Tibial artery (tissue), 4 donors: ENCODE measurements at regions of chr12 and their contacts with region 1.

Region 1: DNA sequence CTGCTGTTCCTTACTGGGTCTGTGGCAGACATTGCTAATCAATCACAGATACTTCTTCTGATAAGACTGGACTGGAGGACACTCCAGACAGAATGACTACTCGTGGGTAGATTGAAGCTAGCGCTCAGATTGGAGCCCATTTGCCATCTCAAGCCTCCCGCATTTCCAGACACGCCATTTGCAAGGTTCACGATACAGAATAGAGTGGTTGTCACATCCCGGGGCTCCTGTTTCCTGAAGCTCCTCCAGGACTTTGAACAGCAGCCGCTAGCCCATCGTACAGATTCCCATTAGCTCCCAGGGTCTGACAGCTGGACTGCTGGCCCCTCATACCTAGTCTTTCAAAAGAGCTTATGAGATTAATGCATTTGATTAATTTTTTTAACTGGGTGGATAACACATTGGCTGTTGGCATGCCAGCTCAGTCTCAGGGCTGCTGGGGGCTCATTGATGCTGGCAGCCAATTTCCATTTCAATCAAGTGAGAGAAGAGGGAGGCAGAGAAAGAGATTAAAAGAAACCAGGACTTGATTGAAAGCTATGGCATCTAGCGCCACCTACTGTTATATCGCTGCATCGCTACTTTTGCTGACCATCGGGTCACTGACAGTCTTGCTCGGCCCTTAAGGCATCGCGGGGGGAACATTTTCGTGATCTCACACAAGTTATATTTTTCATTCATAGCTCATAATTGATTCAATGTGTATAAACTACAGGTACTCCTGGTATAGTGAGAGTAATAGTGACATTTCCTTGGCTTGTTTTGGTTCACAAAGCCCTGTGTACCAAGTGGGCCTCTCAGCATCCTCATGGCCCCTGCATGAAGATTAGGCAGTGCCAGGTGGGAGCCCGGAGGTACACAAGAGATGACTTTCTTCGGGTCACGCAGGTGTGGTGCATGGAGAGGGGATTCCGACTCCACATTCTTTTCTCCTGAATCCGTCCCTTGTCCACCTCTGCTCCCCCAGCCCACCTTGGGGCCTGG is 78.6 kb downstream of the CCDC60 start:
- DNase-seq: peak; percentile 52 to 67
- H3K4me3 ChIP-seq: no peak overlapping the region
- H3K27ac ChIP-seq: no peak overlapping the region
- H3K4me1 ChIP-seq: no peaks in the 10 kb centered on the region
- H3K27me3 ChIP-seq: peaks cover 0 to 20% of the 10 kb centered on the region in 2 donors
- CTCF ChIP-seq: peak; percentile 78 to 90

Region 2: GRCh38 chr12:118884226-118884625 is 528.9 kb before region 1 on chr12:
- intact Hi-C with region 1: no loop called
- DNase-seq: no peak
- H3K4me3 ChIP-seq: no peak overlapping the region
- H3K27ac ChIP-seq: no peak overlapping the region
- H3K4me1 ChIP-seq: no peaks in the 10 kb centered on the region
- H3K27me3 ChIP-seq: no peaks in the 10 kb centered on the region
- CTCF ChIP-seq: no peak

Region 3: GRCh38 chr12:118979763-118980406 is 433.2 kb before region 1 on chr12:
- intact Hi-C with region 1: loop called (anchors 10 kb)
- DNase-seq: no peak
- H3K4me3 ChIP-seq: no peak overlapping the region
- H3K27ac ChIP-seq: no peak overlapping the region
- H3K4me1 ChIP-seq: peaks cover 0 to 17% (median 9%) of the 10 kb centered on the region in 4 donors
- H3K27me3 ChIP-seq: peaks cover 0 to 39% of the 10 kb centered on the region in 2 donors
- CTCF ChIP-seq: peak; percentile 40 to 54

Region 4: GRCh38 chr12:119115296-119115905 is 297.7 kb before region 1 on chr12:
- intact Hi-C with region 1: loop called (anchors 2 kb)
- DNase-seq: no peak
- H3K4me3 ChIP-seq: no peak overlapping the region
- H3K27ac ChIP-seq: no peak overlapping the region
- H3K4me1 ChIP-seq: peaks cover 0 to 3% (median 0%) of the 10 kb centered on the region in 4 donors
- H3K27me3 ChIP-seq: peaks cover 0 to 16% of the 10 kb centered on the region in 2 donors
- CTCF ChIP-seq: peak; percentile 88 to 93

Region 5: DNA sequence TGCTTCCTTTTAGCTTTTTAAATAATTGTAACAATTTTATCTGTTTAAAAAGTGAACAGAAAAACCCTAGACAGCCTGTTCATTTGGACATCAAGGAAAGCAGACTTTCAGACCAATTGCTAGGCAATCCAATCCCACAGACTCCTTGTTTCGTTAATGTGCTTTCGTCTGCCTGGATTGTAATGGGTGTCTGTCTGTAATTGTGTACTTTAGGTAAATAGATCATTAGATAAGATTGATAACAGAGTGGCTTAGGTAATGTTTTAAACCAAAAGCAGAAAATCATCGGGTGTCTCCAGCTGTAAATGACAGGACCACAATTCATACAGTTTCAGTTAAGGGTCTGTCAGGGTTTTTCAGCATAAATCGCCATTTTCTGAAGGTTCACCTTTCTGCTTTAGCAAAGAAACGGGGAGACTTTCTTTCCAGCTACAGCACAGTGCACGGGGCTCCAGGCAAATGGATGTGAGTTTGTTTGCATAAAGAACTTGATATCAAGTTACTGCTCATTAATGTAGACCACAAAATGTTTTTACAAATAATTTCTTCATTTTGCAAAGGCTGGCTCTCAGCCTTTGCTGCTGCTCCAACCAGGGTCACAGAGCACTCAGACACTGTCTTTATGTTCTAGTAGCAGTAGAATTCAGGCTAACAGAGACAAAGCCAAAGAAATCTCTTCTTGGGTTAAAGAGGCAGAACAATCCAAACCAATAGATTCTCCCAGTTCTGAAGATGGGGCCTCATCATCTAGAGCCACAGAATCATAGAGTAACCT is 58.7 kb before region 1 on chr12:
- intact Hi-C with region 1: no loop called
- DNase-seq: no peak
- H3K4me3 ChIP-seq: no peak overlapping the region
- H3K27ac ChIP-seq: no peak overlapping the region
- H3K4me1 ChIP-seq: no peaks in the 10 kb centered on the region
- H3K27me3 ChIP-seq: peaks cover 0 to 3% of the 10 kb centered on the region in 2 donors
- CTCF ChIP-seq: no peak